CD4-positive, alpha-beta T cell (primary cell): ENCODE measurements at regions of chr3 and their contacts with region 1.

Region 1: GRCh38 chr3:17841190-17841828 is 98.9 kb upstream of the TBC1D5 start:
- DNase-seq: peak; percentile 48 to 79 (median 65)
- ATAC-seq: peak; percentile 74
- H3K4me3 ChIP-seq: no peak overlapping the region
- H3K4me3 Mint-ChIP-seq: no peak overlapping the region
- H3K27ac ChIP-seq: no peak overlapping the region
- H3K27ac Mint-ChIP-seq: no peak overlapping the region
- H3K4me1 ChIP-seq: peaks cover 3% of the 10 kb centered on the region
- H3K4me1 Mint-ChIP-seq: no peaks in the 10 kb centered on the region
- H3K27me3 ChIP-seq: no peaks in the 10 kb centered on the region
- H3K27me3 Mint-ChIP-seq: no peaks in the 10 kb centered on the region
- CTCF ChIP-seq: peak; percentile 94

Region 2: GRCh38 chr3:16600780-16601539 is 1240.3 kb before region 1 on chr3:
- CTCF ChIA-PET with region 1: interaction called, 6 read pairs
- POLR2A ChIA-PET with region 1: no interaction called
- intact Hi-C with region 1: loop called (anchors 1 kb)
- DNase-seq: peak; percentile 69 to 92 (median 81)
- ATAC-seq: peak; percentile 39
- H3K4me3 ChIP-seq: no peak overlapping the region
- H3K4me3 Mint-ChIP-seq: no peak overlapping the region
- H3K27ac ChIP-seq: no peak overlapping the region
- H3K27ac Mint-ChIP-seq: no peak overlapping the region
- H3K4me1 ChIP-seq: no peaks in the 10 kb centered on the region
- H3K4me1 Mint-ChIP-seq: peaks cover 17% of the 10 kb centered on the region
- H3K27me3 ChIP-seq: no peaks in the 10 kb centered on the region
- H3K27me3 Mint-ChIP-seq: no peaks in the 10 kb centered on the region
- CTCF ChIP-seq: peak; percentile 96

Region 3: GRCh38 chr3:17258823-17259436 is 582.4 kb before region 1 on chr3:
- CTCF ChIA-PET with region 1: interaction called, 5 read pairs
- POLR2A ChIA-PET with region 1: interaction called, 3 read pairs
- intact Hi-C with region 1: loop called (anchors 1 to 2 kb)
- DNase-seq: peak in 4 of 14 experiments; percentile 34 to 69 (median 60)
- ATAC-seq: peak; percentile 39
- H3K4me3 ChIP-seq: no peak overlapping the region
- H3K4me3 Mint-ChIP-seq: no peak overlapping the region
- H3K27ac ChIP-seq: no peak overlapping the region
- H3K27ac Mint-ChIP-seq: no peak overlapping the region
- H3K4me1 ChIP-seq: no peaks in the 10 kb centered on the region
- H3K4me1 Mint-ChIP-seq: no peaks in the 10 kb centered on the region
- H3K27me3 ChIP-seq: no peaks in the 10 kb centered on the region
- H3K27me3 Mint-ChIP-seq: no peaks in the 10 kb centered on the region
- CTCF ChIP-seq: peak; percentile 92

Region 4: GRCh38 chr3:17431004-17431403 is 410.3 kb before region 1 on chr3:
- CTCF ChIA-PET with region 1: interaction called, 7 read pairs
- POLR2A ChIA-PET with region 1: no interaction called
- intact Hi-C with region 1: loop called (anchors 2 kb)
- DNase-seq: peak in 2 of 14 experiments; percentile 11 to 12
- ATAC-seq: no peak
- H3K4me3 ChIP-seq: no peak overlapping the region
- H3K4me3 Mint-ChIP-seq: no peak overlapping the region
- H3K27ac ChIP-seq: no peak overlapping the region
- H3K27ac Mint-ChIP-seq: no peak overlapping the region
- H3K4me1 ChIP-seq: no peaks in the 10 kb centered on the region
- H3K4me1 Mint-ChIP-seq: no peaks in the 10 kb centered on the region
- H3K27me3 ChIP-seq: no peaks in the 10 kb centered on the region
- H3K27me3 Mint-ChIP-seq: no peaks in the 10 kb centered on the region
- CTCF ChIP-seq: peak; percentile 21

Region 5: GRCh38 chr3:17645072-17645698 is 196.1 kb before region 1 on chr3:
- CTCF ChIA-PET with region 1: interaction called, 13 read pairs
- POLR2A ChIA-PET with region 1: no interaction called
- intact Hi-C with region 1: loop called (anchors 1 kb)
- DNase-seq: peak in 3 of 14 experiments; percentile 38 to 52 (median 49)
- ATAC-seq: no peak
- H3K4me3 ChIP-seq: no peak overlapping the region
- H3K4me3 Mint-ChIP-seq: no peak overlapping the region
- H3K27ac ChIP-seq: no peak overlapping the region
- H3K27ac Mint-ChIP-seq: no peak overlapping the region
- H3K4me1 ChIP-seq: no peaks in the 10 kb centered on the region
- H3K4me1 Mint-ChIP-seq: peaks cover 6% of the 10 kb centered on the region
- H3K27me3 ChIP-seq: no peaks in the 10 kb centered on the region
- H3K27me3 Mint-ChIP-seq: no peaks in the 10 kb centered on the region
- CTCF ChIP-seq: peak; percentile 60

Region 6: GRCh38 chr3:17894434-17895060 is 53.2 kb after region 1 on chr3:
- CTCF ChIA-PET with region 1: no interaction called
- POLR2A ChIA-PET with region 1: no interaction called
- intact Hi-C with region 1: no loop called
- DNase-seq: peak in 10 of 14 experiments; percentile 6 to 42 (median 26)
- ATAC-seq: peak; percentile 39
- H3K4me3 ChIP-seq: no peak overlapping the region
- H3K4me3 Mint-ChIP-seq: no peak overlapping the region
- H3K27ac ChIP-seq: no peak overlapping the region
- H3K27ac Mint-ChIP-seq: no peak overlapping the region
- H3K4me1 ChIP-seq: no peaks in the 10 kb centered on the region
- H3K4me1 Mint-ChIP-seq: no peaks in the 10 kb centered on the region
- H3K27me3 ChIP-seq: no peaks in the 10 kb centered on the region
- H3K27me3 Mint-ChIP-seq: no peaks in the 10 kb centered on the region
- CTCF ChIP-seq: no peak

Region 7: GRCh38 chr3:18469775-18470174 is 628.5 kb after region 1 on chr3:
- CTCF ChIA-PET with region 1: no interaction called
- POLR2A ChIA-PET with region 1: no interaction called
- intact Hi-C with region 1: loop called in 1 of 2 experiments (anchors 5 kb)
- DNase-seq: no peak
- ATAC-seq: no peak
- H3K4me3 ChIP-seq: no peak overlapping the region
- H3K4me3 Mint-ChIP-seq: no peak overlapping the region
- H3K27ac ChIP-seq: no peak overlapping the region
- H3K27ac Mint-ChIP-seq: no peak overlapping the region
- H3K4me1 ChIP-seq: no peaks in the 10 kb centered on the region
- H3K4me1 Mint-ChIP-seq: peaks cover 11% of the 10 kb centered on the region
- H3K27me3 ChIP-seq: no peaks in the 10 kb centered on the region
- H3K27me3 Mint-ChIP-seq: no peaks in the 10 kb centered on the region
- CTCF ChIP-seq: no peak